ENCODE measurements at regions of chr3 and their contacts with region 1.

Region 1: DNA sequence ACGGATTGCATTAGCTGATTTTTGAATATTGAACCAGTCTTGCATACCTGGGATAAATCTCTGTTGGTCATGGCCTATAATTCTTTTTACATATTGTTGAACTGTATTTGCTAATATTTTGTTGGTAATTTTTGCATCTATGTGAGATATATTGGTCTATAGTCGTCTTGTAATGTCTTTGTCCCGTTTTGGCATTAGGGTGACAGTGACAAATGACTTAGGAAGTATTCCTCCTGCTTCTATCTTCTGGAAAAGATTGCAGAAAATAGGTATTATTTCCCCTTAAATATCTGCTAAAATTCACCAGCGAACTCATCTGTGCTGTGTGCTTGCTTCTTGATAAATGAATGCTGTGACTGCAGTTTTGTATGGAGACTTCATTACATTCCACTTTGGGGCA is 23.7 kb downstream of the MUC20 start:
- DNase-seq: no peak
- ATAC-seq: no peak
- H3K4me3 ChIP-seq: no peak overlapping the region
- H3K27ac ChIP-seq: no peak overlapping the region
- H3K4me1 ChIP-seq: no peaks in the 10 kb centered on the region
- H3K27me3 ChIP-seq: peaks cover 7% of the 10 kb centered on the region; the same call in 1 of the 2 replicates
- CTCF ChIP-seq: no peak

Region 2: DNA sequence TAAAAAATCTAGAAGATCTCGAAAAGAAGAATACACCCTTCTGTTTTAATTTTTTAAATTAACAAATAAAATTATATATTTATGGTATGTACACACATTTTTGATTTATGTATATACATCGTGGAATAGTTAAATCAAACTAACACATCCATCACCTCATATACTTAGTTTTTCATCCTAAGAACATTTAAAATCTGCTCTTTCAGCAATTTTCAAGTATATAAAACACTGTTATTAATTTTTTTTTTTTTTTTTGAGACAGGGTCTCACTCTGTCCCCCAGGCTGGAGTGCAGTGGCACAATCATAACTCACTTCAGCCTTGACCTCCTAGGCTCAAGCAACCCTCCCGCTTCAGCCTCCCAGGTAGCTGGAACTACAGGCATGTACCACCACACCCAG is 268.8 kb before region 1 on chr3:
- CTCF ChIA-PET with region 1: no interaction called
- POLR2A ChIA-PET with region 1: no interaction called
- intact Hi-C with region 1: no loop called
- DNase-seq: no peak
- ATAC-seq: no peak
- H3K4me3 ChIP-seq: no peak overlapping the region
- H3K27ac ChIP-seq: no peak overlapping the region
- H3K4me1 ChIP-seq: no peaks in the 10 kb centered on the region
- H3K27me3 ChIP-seq: peaks cover 17% of the 10 kb centered on the region
- CTCF ChIP-seq: no peak

Region 3: DNA sequence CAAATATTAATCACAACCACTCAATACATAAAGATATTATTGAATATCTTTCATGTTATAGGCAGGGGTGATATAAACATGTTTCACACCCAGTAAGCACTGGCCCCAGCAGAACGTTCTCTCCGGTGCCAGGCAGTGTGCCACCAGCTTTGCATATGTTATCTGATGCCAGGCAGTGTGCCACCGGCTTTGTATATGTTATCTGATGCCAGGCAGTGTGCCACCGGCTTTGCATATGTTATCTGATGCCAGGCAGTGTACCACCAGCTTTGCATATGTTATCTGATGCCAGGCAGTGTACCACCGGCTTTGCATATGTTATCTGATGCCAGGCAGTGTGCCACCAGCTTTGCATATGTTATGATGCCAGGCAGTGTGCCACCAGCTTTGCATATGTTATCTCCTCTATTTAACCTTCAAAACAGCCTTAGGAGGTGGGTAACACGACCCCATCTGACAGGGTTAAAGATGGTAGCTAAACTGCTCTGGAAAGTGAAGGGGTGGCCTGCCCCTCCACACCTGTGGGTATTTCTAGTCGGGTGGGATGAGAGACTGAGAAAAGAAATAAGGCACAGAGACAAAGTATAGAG is 16.7 kb before region 1 on chr3:
- CTCF ChIA-PET with region 1: no interaction called
- POLR2A ChIA-PET with region 1: no interaction called
- intact Hi-C with region 1: loop called (anchors 2 kb)
- DNase-seq: no peak
- ATAC-seq: no peak
- H3K4me3 ChIP-seq: no peak overlapping the region
- H3K27ac ChIP-seq: no peak overlapping the region
- H3K4me1 ChIP-seq: no peaks in the 10 kb centered on the region
- H3K27me3 ChIP-seq: no peaks in the 10 kb centered on the region
- CTCF ChIP-seq: no peak

Measured in PC-3 (cell line).